ENCODE measurements at regions of chr3 and their contacts with region 1.

Region 1: GRCh38 chr3:102536456-102536855 is 101.6 kb downstream of the ZPLD1 start:
- DNase-seq: peak; percentile 61

Region 2: GRCh38 chr3:101803173-101803782 is 733.2 kb before region 1 on chr3:
- in situ Hi-C with region 1: loop called (anchors 25 kb)
- DNase-seq: peak; percentile 84

Region 3: GRCh38 chr3:102235679-102236078 is 300.8 kb before region 1 on chr3:
- in situ Hi-C with region 1: loop called (anchors 5 kb)
- DNase-seq: peak; percentile 42

Region 4: DNA sequence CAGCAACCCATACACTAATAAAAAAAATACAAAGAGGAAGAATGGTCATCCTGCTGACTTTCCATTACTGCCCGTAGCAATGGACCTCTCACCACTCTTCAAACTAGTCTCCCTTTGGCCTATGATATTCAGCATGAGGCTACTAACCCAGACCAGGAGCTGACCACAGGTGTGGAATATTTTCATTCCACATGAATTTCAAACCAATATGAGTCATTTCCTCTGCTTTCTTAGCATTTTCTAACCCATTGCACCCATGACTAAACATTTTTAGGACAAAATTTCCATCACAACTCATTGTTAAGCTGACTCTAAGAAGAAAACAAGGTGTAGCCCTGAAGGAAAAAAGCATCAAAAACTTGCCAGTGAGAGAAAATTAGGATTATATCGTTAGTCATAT is 135.7 kb before region 1 on chr3:
- in situ Hi-C with region 1: no loop called
- DNase-seq: no peak

Measured in SK-MEL-5 (cell line).